SK-N-SH (cell line): ENCODE measurements at regions of chr12 and their contacts with region 1.

Region 1: DNA sequence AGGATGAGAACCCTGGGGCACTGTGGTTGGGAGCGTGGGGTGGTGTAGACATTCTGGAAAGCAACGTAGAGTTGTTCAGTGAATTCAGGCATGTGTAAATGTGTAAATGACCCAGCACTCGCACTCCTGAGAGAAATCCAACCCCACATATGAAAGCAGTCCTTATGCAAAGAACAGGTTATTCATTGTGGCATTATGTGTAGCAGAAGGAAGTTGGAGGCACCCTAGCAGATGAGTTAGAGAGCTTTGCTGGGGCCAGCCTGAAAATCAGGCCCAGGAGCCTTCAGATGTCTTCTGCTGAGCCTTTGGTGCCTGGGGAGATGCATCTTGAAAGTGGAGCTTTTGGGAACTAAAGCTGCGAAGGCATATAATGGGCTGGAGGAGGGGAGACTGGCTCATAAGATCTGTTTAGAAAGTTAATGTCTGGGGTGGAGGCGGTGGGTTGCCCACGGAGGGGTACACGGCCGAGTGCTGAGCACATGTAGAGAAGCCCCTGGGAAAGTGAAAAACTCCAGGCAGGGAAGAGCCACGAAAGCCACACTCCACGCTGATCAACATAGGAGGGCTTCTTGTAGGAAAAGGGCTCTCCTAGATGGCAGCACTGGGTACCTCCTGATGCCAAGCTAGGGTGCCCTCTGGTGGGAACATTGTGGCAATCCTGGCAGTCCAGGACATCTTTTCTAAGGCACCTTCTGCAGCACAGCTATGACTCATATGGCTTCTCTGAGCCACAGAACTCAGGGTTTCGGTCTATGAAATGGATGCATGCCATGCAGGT is 6.0 kb upstream of the KRT83 start:
- DNase-seq: peak; percentile 91
- H3K4me3 ChIP-seq: no peak overlapping the region
- H3K27ac ChIP-seq: no peak overlapping the region
- H3K4me1 ChIP-seq: peaks cover 0 to 6% of the 10 kb centered on the region in 2 experiments; a peak in 1 of 4 replicates
- H3K27me3 ChIP-seq: no peaks in the 10 kb centered on the region; the same call in 1 of the 2 replicates
- CTCF ChIP-seq: peak; percentile 93
- EP300 ChIP-seq: peak in 1 of 2 experiments; percentile 15; a peak in 1 of 4 replicates
- RAD21 ChIP-seq: peak; percentile 94

Region 2: GRCh38 chr12:52147367-52147972 is 179.8 kb before region 1 on chr12:
- CTCF ChIA-PET with region 1: interaction called, 25 read pairs
- POLR2A ChIA-PET with region 1: no interaction called
- DNase-seq: peak; percentile 58
- H3K4me3 ChIP-seq: no peak overlapping the region
- H3K27ac ChIP-seq: peak overlapping the region in 1 of 2 experiments; percentile 91; a peak in 3 of 4 replicates
- H3K4me1 ChIP-seq: peaks cover 14 to 36% of the 10 kb centered on the region in 2 experiments; a peak in 3 of 4 replicates
- H3K27me3 ChIP-seq: no peaks in the 10 kb centered on the region
- CTCF ChIP-seq: no peak
- EP300 ChIP-seq: peak in 1 of 2 experiments; percentile 88; a peak in 1 of 4 replicates
- RAD21 ChIP-seq: no peak

Region 3: DNA sequence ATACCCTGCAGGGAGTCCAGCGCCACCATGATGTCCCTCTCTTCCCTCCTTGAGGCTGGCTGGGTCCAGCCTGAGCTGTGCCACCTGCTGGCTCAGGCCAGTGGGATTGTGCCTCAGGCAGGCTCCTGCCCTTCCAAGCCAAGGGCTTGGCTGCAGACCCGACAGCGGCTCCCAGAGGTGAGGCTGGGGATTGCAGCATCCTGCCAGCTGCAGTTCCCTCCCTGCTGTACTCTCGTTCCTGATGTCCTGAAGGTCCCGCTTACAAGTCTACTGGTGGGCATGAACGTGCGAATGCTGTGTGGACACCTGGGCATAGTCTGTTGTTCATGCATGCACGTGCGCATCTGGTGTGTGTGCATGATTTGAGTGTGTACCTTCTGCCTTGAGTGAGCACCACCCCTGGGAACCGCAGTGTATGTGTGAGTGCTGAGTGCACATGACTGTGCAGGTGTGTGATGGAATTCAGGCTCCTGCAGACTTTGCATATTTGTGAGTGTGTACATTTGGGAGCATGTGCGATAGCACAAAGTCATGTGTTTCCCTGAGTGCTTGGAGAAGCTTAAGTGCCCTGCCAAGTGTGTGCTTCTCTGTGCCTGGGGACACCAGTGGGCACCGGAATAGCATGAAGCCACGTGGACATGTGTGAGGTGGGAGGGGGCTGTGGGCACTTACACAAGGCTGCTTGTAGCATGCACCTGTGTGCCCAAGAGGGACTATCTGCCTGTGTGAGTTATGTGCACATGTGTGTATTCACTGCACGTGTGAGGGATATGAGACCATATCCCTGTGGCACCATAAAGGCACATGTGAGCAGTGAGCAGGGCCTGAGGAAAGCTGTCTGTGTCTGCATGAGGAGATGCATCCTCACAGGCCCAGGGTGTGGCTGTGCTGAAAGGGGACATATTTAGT is 113.5 kb before region 1 on chr12:
- CTCF ChIA-PET with region 1: interaction called, 51 read pairs
- POLR2A ChIA-PET with region 1: no interaction called
- DNase-seq: peak; percentile 82
- H3K4me3 ChIP-seq: no peak overlapping the region; a peak in 1 of 4 replicates
- H3K27ac ChIP-seq: peak overlapping the region in 1 of 2 experiments; percentile 5; a peak in 1 of 4 replicates
- H3K4me1 ChIP-seq: peaks cover 15 to 68% of the 10 kb centered on the region in 2 experiments; a peak in 3 of 4 replicates
- H3K27me3 ChIP-seq: no peaks in the 10 kb centered on the region
- CTCF ChIP-seq: peak; percentile 95
- EP300 ChIP-seq: 0 out of 4 replicates have a peak, but pooled peaks of 1 of the 2 experiments have one; percentile 32
- RAD21 ChIP-seq: peak; percentile 96

Region 4: GRCh38 chr12:52258335-52258901 is 68.8 kb before region 1 on chr12:
- CTCF ChIA-PET with region 1: interaction called, 42 read pairs
- POLR2A ChIA-PET with region 1: no interaction called
- DNase-seq: peak; percentile 82
- H3K4me3 ChIP-seq: peak overlapping the region in 1 of 2 experiments; percentile 17; a peak in 1 of 4 replicates
- H3K27ac ChIP-seq: no peak overlapping the region
- H3K4me1 ChIP-seq: peaks cover 3 to 16% of the 10 kb centered on the region in 2 experiments; a peak in 3 of 4 replicates
- H3K27me3 ChIP-seq: no peaks in the 10 kb centered on the region
- CTCF ChIP-seq: no peak
- EP300 ChIP-seq: no peak
- RAD21 ChIP-seq: no peak

Region 5: DNA sequence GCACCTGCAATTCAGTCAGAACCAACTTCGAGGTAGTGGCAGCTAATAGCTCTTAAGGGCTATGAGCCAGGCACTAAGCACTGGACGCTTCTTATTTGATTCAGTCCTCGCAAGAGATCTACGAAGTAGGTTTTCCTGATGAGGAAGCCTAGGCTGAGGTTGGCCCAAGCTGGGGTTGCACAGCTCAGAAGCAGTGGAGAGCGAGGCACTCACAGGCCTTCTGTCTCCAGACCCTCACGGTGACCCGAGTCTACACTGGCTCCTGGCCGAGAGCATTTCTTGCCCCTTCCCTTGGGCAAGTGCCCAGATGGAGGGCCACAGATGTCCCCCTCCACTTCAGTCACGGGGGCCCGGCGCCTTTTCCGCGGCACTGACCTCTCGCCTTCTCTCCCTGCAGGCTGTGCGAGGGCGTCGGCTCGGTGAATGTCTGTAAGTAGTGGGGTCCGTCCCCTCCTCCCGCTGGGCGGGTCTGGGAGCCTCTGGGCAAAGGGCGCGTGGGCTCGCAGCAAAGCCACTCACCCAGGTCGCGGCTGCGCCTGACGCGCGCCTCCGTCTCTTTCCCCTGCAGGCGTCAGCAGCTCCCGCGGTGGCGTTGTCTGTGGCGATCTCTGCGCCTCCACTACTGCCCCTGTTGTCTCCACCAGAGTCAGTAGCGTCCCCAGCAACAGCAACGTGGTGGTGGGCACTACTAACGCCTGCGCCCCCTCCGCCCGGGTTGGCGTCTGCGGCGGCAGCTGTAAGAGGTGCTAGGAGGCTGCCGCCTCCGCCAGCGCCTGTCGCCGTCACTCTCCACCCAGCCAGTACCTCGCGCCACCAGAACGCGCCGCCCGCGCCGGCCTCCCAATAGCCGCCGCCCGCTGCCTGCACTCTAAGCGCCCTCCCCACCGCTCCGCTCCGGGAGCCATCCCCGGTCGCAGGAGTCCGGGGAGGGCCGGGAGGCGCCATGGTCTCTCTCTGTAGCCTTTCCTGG is 19.1 kb before region 1 on chr12:
- CTCF ChIA-PET with region 1: interaction called, 218 read pairs
- POLR2A ChIA-PET with region 1: no interaction called
- DNase-seq: peak; percentile 89
- H3K4me3 ChIP-seq: peak overlapping the region; percentile 29 to 39; a peak in 3 of 4 replicates
- H3K27ac ChIP-seq: no peak overlapping the region
- H3K4me1 ChIP-seq: peaks cover 0 to 9% of the 10 kb centered on the region in 2 experiments; a peak in 1 of 4 replicates
- H3K27me3 ChIP-seq: no peaks in the 10 kb centered on the region
- CTCF ChIP-seq: no peak
- EP300 ChIP-seq: no peak
- RAD21 ChIP-seq: no peak; the same call in 1 of the 2 replicates

Region 6: GRCh38 chr12:52372216-52373154 is 45.2 kb after region 1 on chr12:
- CTCF ChIA-PET with region 1: interaction called, 10 read pairs
- POLR2A ChIA-PET with region 1: no interaction called
- DNase-seq: peak; percentile 87
- H3K4me3 ChIP-seq: peak overlapping the region in 1 of 2 experiments; percentile 43; a peak in 1 of 4 replicates
- H3K27ac ChIP-seq: no peak overlapping the region
- H3K4me1 ChIP-seq: no peaks in the 10 kb centered on the region
- H3K27me3 ChIP-seq: peaks cover 48% of the 10 kb centered on the region
- CTCF ChIP-seq: peak; percentile 81
- EP300 ChIP-seq: no peak
- RAD21 ChIP-seq: peak; percentile 94

Region 7: DNA sequence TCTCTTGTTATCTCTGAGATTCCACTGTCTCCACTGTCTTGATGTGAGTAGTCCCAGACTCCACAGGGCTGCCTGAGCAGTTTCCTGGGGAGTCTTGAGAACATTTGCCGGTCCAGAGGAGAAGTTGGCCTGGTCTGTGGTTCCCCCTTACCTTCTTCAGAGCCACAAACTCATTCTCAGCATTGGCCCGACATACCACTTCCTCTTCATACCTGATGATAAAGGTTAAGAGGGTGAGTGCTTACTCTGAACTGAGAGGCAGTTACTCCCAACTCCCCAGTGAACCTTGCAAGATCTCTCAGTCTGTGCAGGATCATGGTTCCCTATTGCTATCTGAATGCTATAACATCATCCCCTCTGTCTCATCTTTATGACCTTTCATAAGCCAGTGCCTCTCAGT is 55.6 kb after region 1 on chr12:
- CTCF ChIA-PET with region 1: no interaction called
- POLR2A ChIA-PET with region 1: no interaction called
- DNase-seq: no peak
- H3K4me3 ChIP-seq: no peak overlapping the region
- H3K27ac ChIP-seq: no peak overlapping the region
- H3K4me1 ChIP-seq: no peaks in the 10 kb centered on the region; a peak in 1 of 4 replicates
- H3K27me3 ChIP-seq: peaks cover 74% of the 10 kb centered on the region
- CTCF ChIP-seq: no peak
- EP300 ChIP-seq: no peak
- RAD21 ChIP-seq: no peak